Activated T-helper 1 cell treated with anti-CD3 and anti-CD28 coated beads, Interleukin-12 subunit alpha, Interleukin-12 subunit beta, Interleukin-2, Interleukin-4 antibody, amounts not matched to agents 30 ng/mL and 10 ng/mL and 1 ng/mL, durations not matched to agents 14 hours and 24 hours and 36 hours (primary cell): ENCODE measurements at regions of chr14 and their contacts with region 1.

Region 1: DNA sequence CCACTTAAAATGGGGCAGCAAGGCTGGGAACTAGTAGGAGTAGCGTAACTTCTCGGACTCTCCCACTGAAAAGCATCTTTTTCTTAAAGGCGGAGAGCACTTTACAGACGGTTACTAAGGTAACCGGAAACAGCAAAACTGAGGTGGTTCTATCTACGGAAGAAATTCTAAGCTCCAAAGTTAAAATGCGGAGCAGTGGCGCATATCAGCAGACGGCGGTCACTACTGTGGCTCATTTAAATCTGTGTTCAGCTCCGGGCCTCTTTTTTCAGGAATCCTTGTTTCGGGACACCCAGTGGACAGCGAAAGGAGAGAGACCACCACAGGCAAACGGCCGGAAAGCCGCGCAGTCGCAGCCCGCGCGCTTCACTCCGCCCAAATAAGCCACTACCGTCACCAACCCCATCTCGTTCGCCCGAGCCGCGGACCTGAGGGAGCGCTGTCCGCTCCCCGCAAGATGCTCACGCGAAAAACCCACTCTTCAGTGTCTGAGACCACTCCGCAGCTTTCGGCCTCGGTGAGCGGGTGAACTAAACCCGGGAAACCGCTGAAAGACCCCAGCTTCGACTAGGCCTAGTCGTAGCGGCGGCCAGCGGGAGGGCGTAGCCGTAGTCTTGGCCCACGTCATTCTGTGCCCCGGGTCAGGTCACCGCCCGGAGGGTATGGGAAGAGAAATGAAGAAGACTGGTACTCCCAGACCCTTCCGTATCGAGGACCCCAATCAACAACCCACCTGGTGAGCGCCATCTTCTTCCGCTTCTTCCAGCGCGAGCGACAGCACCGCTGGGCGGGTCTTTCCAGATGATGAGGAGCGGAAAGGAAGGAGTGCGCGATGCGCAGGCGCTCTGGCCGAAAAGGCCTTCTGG is at the start of gene SNW1:
- DNase-seq: peak; percentile 91
- H3K4me3 Mint-ChIP-seq: peak within 1 kb of the TSS; percentile 96
- H3K27ac Mint-ChIP-seq: peak within 1 kb of the TSS; percentile 97
- H3K4me1 Mint-ChIP-seq: peaks cover 38% of the 10 kb centered on the region
- H3K27me3 Mint-ChIP-seq: peaks cover 6% of the 10 kb centered on the region
- total RNA-seq, gene SNW1: 112 and 118 TPM in 2 replicates

Region 2: GRCh38 chr14:77301103-77301502 is 459.5 kb before region 1 on chr14:
- intact Hi-C with region 1: loop called (anchors 5 kb)
- DNase-seq: peak; percentile 16
- H3K4me3 Mint-ChIP-seq: no peak overlapping the region
- H3K27ac Mint-ChIP-seq: no peak overlapping the region
- H3K4me1 Mint-ChIP-seq: peaks cover 24% of the 10 kb centered on the region
- H3K27me3 Mint-ChIP-seq: no peaks in the 10 kb centered on the region

Region 3: GRCh38 chr14:77470192-77470870 is 290.3 kb before region 1 on chr14:
- intact Hi-C with region 1: no loop called
- DNase-seq: no peak
- H3K4me3 Mint-ChIP-seq: no peak overlapping the region
- H3K27ac Mint-ChIP-seq: no peak overlapping the region
- H3K4me1 Mint-ChIP-seq: no peaks in the 10 kb centered on the region
- H3K27me3 Mint-ChIP-seq: peaks cover 3% of the 10 kb centered on the region

Region 4: GRCh38 chr14:77738559-77739250 is 21.9 kb before region 1 on chr14:
- intact Hi-C with region 1: no loop called
- DNase-seq: no peak
- H3K4me3 Mint-ChIP-seq: no peak overlapping the region
- H3K27ac Mint-ChIP-seq: no peak overlapping the region
- H3K4me1 Mint-ChIP-seq: peaks cover 16% of the 10 kb centered on the region
- H3K27me3 Mint-ChIP-seq: no peaks in the 10 kb centered on the region

Region 5: GRCh38 chr14:77799863-77800730 is 39.5 kb after region 1 on chr14 and contains the start of gene ADCK1:
- intact Hi-C with region 1: loop called (anchors 1 kb)
- DNase-seq: peak; percentile 81
- H3K4me3 Mint-ChIP-seq: peak within 1 kb of the TSS; percentile 88
- H3K27ac Mint-ChIP-seq: peak within 1 kb of the TSS; percentile 80
- H3K4me1 Mint-ChIP-seq: peaks cover 14% of the 10 kb centered on the region
- H3K27me3 Mint-ChIP-seq: peaks cover 5% of the 10 kb centered on the region
- total RNA-seq, gene ADCK1: 3.9 and 5.4 TPM in 2 replicates